Activated CD8-positive, alpha-beta T cell treated with anti-CD3 and anti-CD28 coated beads, Interleukin-2, amount 10 ng/mL, durations not matched to agents 7 days and 5 days (primary cell): ENCODE measurements at regions of chr10 and their contacts with region 1.

Region 1: GRCh38 chr10:73529089-73529832 is 33.4 kb upstream of the PPP3CB start:
- DNase-seq: peak; percentile 73
- ATAC-seq: peak; percentile 96
- H3K4me3 Mint-ChIP-seq: no peak overlapping the region
- H3K27ac Mint-ChIP-seq: no peak overlapping the region
- H3K4me1 Mint-ChIP-seq: no peaks in the 10 kb centered on the region
- H3K27me3 Mint-ChIP-seq: no peaks in the 10 kb centered on the region

Region 2: DNA sequence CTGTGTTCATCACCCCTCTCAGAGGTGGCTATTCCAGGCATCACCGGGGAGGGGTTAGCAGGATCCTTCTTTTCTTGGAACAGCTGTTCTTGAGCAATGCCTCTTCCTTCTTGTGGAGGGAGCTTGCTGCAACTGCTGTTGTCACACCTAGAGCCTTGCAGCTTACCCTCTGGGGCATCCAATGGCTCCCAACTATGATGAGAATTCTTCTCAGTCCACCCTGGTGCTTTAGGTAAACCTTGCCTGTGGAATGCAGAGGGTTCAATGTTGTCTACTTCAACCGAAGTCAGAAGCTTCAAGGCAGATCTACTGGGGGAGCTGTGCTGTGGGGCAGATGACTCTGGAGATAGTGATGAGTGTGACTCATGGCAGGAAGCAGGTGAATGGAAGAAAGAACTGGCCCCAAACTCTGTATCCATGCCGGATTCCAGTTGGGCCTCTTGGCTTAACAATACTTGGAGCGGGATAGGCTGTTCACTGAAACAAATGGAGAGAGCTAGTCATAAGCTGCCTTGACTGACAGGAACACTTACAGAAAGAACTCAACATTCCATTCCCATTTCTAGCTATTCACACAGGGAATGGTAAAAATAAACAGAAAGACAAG is 11.9 kb before region 1 on chr10:
- CTCF ChIA-PET with region 1: interaction called, 24 read pairs
- POLR2A ChIA-PET with region 1: no interaction called
- DNase-seq: no peak
- ATAC-seq: no peak
- H3K4me3 Mint-ChIP-seq: no peak overlapping the region
- H3K27ac Mint-ChIP-seq: no peak overlapping the region
- H3K4me1 Mint-ChIP-seq: no peaks in the 10 kb centered on the region
- H3K27me3 Mint-ChIP-seq: no peaks in the 10 kb centered on the region

Region 3: GRCh38 chr10:73591935-73592699 is 62.9 kb after region 1 on chr10:
- CTCF ChIA-PET with region 1: interaction called, 10 read pairs
- POLR2A ChIA-PET with region 1: no interaction called
- DNase-seq: peak; percentile 36
- ATAC-seq: peak; percentile 51
- H3K4me3 Mint-ChIP-seq: peak overlapping the region; percentile 39
- H3K27ac Mint-ChIP-seq: no peak overlapping the region
- H3K4me1 Mint-ChIP-seq: peaks cover 18% of the 10 kb centered on the region
- H3K27me3 Mint-ChIP-seq: no peaks in the 10 kb centered on the region